ENCODE measurements at regions of chr5 and their contacts with region 1.

Region 1: DNA sequence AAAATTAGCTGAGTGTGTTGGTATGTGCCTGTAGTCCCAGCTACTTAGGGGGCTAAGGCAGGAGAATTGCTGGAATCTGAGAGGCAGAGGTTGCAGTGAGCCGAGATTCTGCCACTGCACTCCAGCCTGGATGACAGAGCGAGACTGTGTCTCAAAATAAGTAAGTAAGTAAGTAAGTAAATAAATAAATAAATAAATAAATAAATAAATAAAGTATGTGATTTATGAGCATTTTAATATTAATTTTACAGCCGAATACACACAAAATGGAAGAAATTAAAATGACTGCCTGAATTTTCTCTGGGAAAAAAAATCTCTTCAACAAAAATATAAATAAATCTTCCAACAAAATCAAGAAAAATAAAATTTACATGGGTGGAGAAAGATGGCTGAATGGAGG is 740.7 kb downstream of the CDH18 start:
- DNase-seq: no peak
- H3K4me3 ChIP-seq: no peak overlapping the region
- H3K27ac ChIP-seq: no peak overlapping the region
- H3K4me1 ChIP-seq: no peaks in the 10 kb centered on the region
- H3K27me3 ChIP-seq: no peaks in the 10 kb centered on the region
- CTCF ChIP-seq: no peak
- POLR2A ChIP-seq: no peak

Region 2: GRCh38 chr5:19388391-19388790 is 141.1 kb after region 1 on chr5:
- intact Hi-C with region 1: loop called (anchors 5 kb)
- DNase-seq: no peak
- H3K4me3 ChIP-seq: no peak overlapping the region
- H3K27ac ChIP-seq: no peak overlapping the region
- H3K4me1 ChIP-seq: no peaks in the 10 kb centered on the region
- H3K27me3 ChIP-seq: no peaks in the 10 kb centered on the region
- CTCF ChIP-seq: no peak
- POLR2A ChIP-seq: no peak

Region 3: DNA sequence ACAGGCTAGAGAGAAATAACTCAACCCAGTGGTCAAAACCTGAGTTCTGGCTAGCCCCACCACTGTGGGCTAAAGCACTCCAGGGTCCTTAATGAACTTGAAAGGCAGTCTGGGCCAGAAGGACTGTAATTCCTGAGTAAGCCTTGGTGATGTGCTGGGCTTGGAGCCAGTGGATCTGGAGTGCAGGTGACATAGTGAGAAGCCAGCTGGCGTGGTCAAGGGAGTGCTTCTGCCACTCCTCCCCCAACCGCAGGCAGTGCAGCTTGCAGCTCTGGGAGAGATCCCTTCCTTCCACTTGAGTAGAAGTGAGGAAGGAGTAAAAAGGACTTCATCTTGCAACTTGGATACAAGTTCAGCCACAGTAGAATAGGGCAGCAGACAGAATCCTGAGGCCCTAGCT is 316.7 kb after region 1 on chr5:
- intact Hi-C with region 1: no loop called
- DNase-seq: no peak
- H3K4me3 ChIP-seq: no peak overlapping the region
- H3K27ac ChIP-seq: no peak overlapping the region
- H3K4me1 ChIP-seq: no peaks in the 10 kb centered on the region
- H3K27me3 ChIP-seq: no peaks in the 10 kb centered on the region
- CTCF ChIP-seq: no peak
- POLR2A ChIP-seq: no peak